ENCODE measurements at regions of chr9 and their contacts with region 1.

Region 1: GRCh38 chr9:107784231-107784958 is 294.8 kb upstream of the KLF4 start:
- DNase-seq: peak; percentile 81 to 97 (median 86)
- ATAC-seq: peak; percentile 94
- H3K4me3 ChIP-seq: 0 out of 2 replicates have a peak overlapping the region, but pooled peaks have one; percentile 3
- H3K27ac ChIP-seq: peak overlapping the region; percentile 83
- H3K4me1 ChIP-seq: peaks cover 23 to 42% of the 10 kb centered on the region in 2 experiments
- H3K27me3 ChIP-seq: no peaks in the 10 kb centered on the region
- CTCF ChIP-seq: no peak
- EP300 ChIP-seq: peak; percentile 96
- POLR2A ChIP-seq: peak; percentile 67
- RAD21 ChIP-seq: peak; percentile 15 to 29; a peak in 3 of 4 replicates

Region 2: DNA sequence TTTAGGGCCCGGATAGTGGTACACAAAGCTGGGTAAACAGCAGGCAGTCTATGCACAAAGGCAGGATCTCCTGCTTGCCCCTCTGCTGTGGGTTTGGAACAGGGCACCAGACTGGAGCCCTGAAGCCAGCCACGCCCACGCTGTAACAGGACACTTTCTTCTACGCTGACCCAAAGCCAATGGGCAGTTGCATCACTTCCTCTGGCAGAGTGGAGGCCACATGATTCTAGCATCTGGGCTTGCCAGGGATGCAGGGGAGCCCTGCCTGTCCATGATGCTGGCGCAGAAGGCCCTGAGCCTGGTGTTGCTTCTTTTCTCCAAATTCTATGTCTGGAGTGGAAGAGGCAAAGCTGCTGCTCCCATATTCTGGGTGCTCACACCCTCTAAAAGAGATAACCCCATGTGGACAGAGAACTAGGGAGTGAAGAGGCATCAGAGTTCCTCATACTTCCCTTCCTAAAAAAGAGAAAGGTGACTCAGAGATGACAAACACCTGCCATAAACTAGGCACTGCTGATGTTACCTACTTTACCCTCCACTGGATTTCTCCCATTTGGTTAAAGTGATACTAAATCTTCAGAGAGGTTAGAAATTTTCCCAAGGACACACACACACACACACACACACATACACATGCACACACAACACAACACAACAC is 34.5 kb before region 1 on chr9:
- CTCF ChIA-PET with region 1: no interaction called
- POLR2A ChIA-PET with region 1: interaction called, 7 read pairs
- in situ Hi-C with region 1: no loop called
- intact Hi-C with region 1: loop called (anchors 1 kb)
- DNase-seq: peak; percentile 29 to 62 (median 38)
- ATAC-seq: peak; percentile 96
- H3K4me3 ChIP-seq: no peak overlapping the region
- H3K27ac ChIP-seq: no peak overlapping the region; the same call in 2 of the 3 replicates
- H3K4me1 ChIP-seq: peaks cover 5 to 17% of the 10 kb centered on the region in 2 experiments; a peak in 3 of 5 replicates
- H3K27me3 ChIP-seq: no peaks in the 10 kb centered on the region
- CTCF ChIP-seq: no peak
- EP300 ChIP-seq: peak; percentile 62
- POLR2A ChIP-seq: no peak
- RAD21 ChIP-seq: 0 out of 4 replicates have a peak, but pooled peaks of 1 of the 2 experiments have one; percentile 8

Region 3: GRCh38 chr9:108093773-108094675 is 309.6 kb after region 1 on chr9:
- CTCF ChIA-PET with region 1: no interaction called
- POLR2A ChIA-PET with region 1: no interaction called
- in situ Hi-C with region 1: no loop called
- intact Hi-C with region 1: loop called (anchors 10 kb)
- DNase-seq: peak; percentile 89 to 97 (median 91)
- ATAC-seq: peak; percentile 94
- H3K4me3 ChIP-seq: no peak overlapping the region
- H3K27ac ChIP-seq: peak overlapping the region; percentile 94
- H3K4me1 ChIP-seq: peaks cover 15 to 49% of the 10 kb centered on the region in 2 experiments
- H3K27me3 ChIP-seq: no peaks in the 10 kb centered on the region
- CTCF ChIP-seq: no peak
- EP300 ChIP-seq: peak; percentile 100
- POLR2A ChIP-seq: no peak; the same call in 1 of the 2 replicates
- RAD21 ChIP-seq: peak in 1 of 2 experiments; percentile 17; a peak in 1 of 4 replicates